ENCODE measurements at regions of chr2 and their contacts with region 1.

Region 1: DNA sequence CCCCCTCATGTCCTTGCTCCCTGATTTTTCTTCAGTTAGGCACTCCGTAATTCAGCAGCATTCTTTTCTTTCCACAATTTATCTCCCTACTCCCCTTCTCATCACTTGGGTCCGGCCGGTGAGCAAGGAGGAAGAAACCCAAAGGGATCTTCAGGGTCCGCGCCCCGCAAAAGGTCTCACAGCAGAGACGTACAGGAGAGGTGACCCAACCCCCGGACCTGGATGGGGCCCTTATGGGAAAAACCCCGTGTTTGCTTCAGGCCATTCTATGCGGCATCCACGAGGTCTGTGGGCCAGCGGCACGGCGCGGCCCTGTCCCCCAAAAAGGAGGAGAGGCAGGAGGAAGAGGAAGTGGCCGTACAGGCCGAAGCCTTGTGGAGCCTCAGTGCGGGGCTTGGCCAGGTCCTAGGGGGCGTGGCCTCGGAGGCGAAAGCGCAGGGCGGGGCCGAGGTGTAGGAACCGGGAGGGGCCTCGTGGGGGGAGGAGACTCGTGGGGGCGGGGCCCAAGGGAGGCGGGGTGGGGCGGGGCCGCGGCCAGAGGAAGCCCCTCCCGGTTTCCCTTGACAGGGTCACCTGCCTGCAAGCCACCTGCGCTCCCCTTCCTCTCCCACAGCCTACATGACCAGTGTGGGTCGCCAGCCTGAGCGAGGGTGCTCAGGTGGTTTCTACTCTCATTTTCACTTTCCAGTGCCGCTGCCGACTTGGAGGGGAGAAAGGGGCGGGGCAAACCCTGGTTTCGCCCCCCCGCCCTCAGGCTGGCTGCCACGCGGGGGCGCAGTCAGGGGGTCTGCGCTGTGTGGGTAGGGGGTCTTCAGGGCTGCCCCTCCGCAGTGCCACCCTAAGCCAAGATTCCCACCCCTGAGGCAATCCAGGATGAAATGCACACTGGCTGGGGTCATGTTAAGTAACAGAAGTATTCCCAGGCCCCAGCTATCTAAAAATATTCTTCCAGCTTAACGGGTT is 156.4 kb upstream of the XPO1 start:
- DNase-seq: peak; percentile 75
- ATAC-seq: peak; percentile 100
- H3K4me3 ChIP-seq: peak overlapping the region; percentile 98
- H3K27ac ChIP-seq: peak overlapping the region; percentile 72
- H3K4me1 ChIP-seq: no peaks in the 10 kb centered on the region
- H3K27me3 ChIP-seq: no peaks in the 10 kb centered on the region
- CTCF ChIP-seq: peak; percentile 34; the same call in 1 of the 2 replicates
- POLR2A ChIP-seq: no peak
- RAD21 ChIP-seq: no peak; the same call in 1 of the 2 replicates

Region 2: GRCh38 chr2:61750624-61751023 is 56.0 kb after region 1 on chr2:
- CTCF ChIA-PET with region 1: no interaction called
- POLR2A ChIA-PET with region 1: no interaction called
- dilution Hi-C with region 1: no loop called
- in situ Hi-C with region 1: no loop called
- intact Hi-C with region 1: loop called (anchors 5 kb)
- DNase-seq: peak; percentile 78
- ATAC-seq: peak; percentile 87
- H3K4me3 ChIP-seq: no peak overlapping the region
- H3K27ac ChIP-seq: no peak overlapping the region
- H3K4me1 ChIP-seq: peaks cover 3% of the 10 kb centered on the region; the same call in 1 of the 2 replicates
- H3K27me3 ChIP-seq: no peaks in the 10 kb centered on the region
- CTCF ChIP-seq: no peak
- POLR2A ChIP-seq: no peak
- RAD21 ChIP-seq: no peak

Measured in IMR-90 (cell line).